ENCODE measurements at regions of chr12 and their contacts with region 1.

Region 1: DNA sequence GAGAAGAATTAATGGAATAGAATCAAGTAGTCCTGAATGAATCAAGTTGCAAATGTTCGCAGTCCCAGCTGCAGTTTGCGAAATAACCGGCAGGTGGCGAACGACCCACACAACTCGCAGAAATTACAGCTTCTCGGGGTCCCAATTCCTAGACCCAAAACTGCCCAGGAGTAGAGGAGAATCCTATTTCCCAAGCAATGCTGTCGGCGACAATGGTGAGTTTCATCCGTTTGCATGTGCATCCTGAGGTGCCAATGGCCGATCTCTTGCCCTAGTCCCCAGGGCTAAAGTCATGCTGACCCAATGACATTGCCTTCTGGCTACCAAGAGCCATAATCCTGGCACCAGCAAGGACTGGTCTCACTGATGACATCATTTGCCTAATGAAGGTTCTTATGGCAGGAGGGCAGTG is 8.5 kb upstream of the ASCL1 start:
- DNase-seq: peak in 2 of 3 donors; percentile 58 to 75
- ATAC-seq: no peak
- H3K4me3 ChIP-seq: no peak overlapping the region
- H3K4me1 ChIP-seq: no peaks in the 10 kb centered on the region
- CTCF ChIP-seq: peak; percentile 71

Region 2: GRCh38 chr12:101876322-101876860 is 1072.6 kb before region 1 on chr12:
- intact Hi-C with region 1: no loop called
- DNase-seq: no peak
- ATAC-seq: no peak
- H3K4me3 ChIP-seq: no peak overlapping the region
- H3K4me1 ChIP-seq: peaks cover 5% of the 10 kb centered on the region
- CTCF ChIP-seq: no peak

Region 3: GRCh38 chr12:103548622-103549601 is 600.0 kb after region 1 on chr12:
- intact Hi-C with region 1: loop called (anchors 2 to 5 kb)
- DNase-seq: peak in 2 of 3 donors; percentile 32 to 86
- ATAC-seq: peak; percentile 61
- H3K4me3 ChIP-seq: no peak overlapping the region
- H3K4me1 ChIP-seq: no peaks in the 10 kb centered on the region
- CTCF ChIP-seq: peak; percentile 46